ENCODE measurements at regions of chr1 and their contacts with region 1.

Region 1: GRCh38 chr1:67053785-67054772 is at the start of gene SLC35D1:
- DNase-seq: peak; percentile 83
- H3K4me3 ChIP-seq: peak within 1 kb of the TSS; percentile 58 to 90 (median 82)
- H3K27ac ChIP-seq: peak within 1 kb of the TSS; percentile 97 to 98 (median 98)
- H3K4me1 ChIP-seq: peaks cover 0 to 29% (median 18%) of the 10 kb centered on the region in 4 donors
- H3K27me3 ChIP-seq: no peaks in the 10 kb centered on the region
- CTCF ChIP-seq: no peak
- EP300 ChIP-seq: no peak
- POLR2A ChIP-seq: peak; percentile 26 to 52
- total RNA-seq, gene SLC35D1: 8.9 to 10.7 (median 9.5) TPM

Region 2: GRCh38 chr1:66924756-66925557 is 129.1 kb before region 1 on chr1 and contains the starts of genes DNAI4 and MIER1:
- intact Hi-C with region 1: loop called (anchors 2 kb)
- DNase-seq: peak; percentile 99
- H3K4me3 ChIP-seq: peak within 1 kb of the TSS; percentile 59 to 91 (median 74)
- H3K27ac ChIP-seq: peak within 1 kb of the TSS; percentile 89 to 95 (median 92)
- H3K4me1 ChIP-seq: peaks cover 0 to 38% (median 32%) of the 10 kb centered on the region in 4 donors
- H3K27me3 ChIP-seq: no peaks in the 10 kb centered on the region
- CTCF ChIP-seq: peak; percentile 27 to 58 (median 40)
- EP300 ChIP-seq: peak in 2 of 4 donors; percentile 34 to 43
- POLR2A ChIP-seq: peak; percentile 23 to 65
- total RNA-seq, gene DNAI4: 5.6 to 16.1 (median 9.5) TPM
- total RNA-seq, gene MIER1: 49.0 to 65.6 (median 58.4) TPM

Region 3: DNA sequence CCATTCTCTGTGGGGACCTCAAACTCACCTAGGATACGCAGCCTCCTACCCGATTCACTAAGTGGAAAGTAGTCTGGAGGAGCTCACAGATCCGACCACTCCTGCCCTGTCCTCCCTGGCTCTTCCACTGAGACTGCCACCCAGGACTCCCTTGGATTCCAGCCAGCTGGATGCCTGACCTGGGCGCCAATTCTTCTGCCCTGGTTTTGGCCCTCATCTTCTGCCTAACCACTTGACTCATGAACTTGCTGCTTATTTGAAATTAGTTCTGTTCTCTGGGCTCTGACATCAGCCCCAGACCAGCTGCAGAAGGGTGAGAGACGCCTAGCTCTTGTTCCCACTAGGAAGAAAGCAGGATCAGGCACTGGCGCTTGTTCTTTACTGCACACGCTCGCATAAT is 49.0 kb before region 1 on chr1:
- intact Hi-C with region 1: loop called (anchors 5 kb)
- DNase-seq: no peak
- H3K4me3 ChIP-seq: no peak overlapping the region
- H3K27ac ChIP-seq: peak overlapping the region in 1 of 4 donors; percentile 6
- H3K4me1 ChIP-seq: peaks cover 0 to 32% (median 16%) of the 10 kb centered on the region in 4 donors
- H3K27me3 ChIP-seq: no peaks in the 10 kb centered on the region
- CTCF ChIP-seq: no peak
- EP300 ChIP-seq: no peak
- POLR2A ChIP-seq: no peak

Region 4: DNA sequence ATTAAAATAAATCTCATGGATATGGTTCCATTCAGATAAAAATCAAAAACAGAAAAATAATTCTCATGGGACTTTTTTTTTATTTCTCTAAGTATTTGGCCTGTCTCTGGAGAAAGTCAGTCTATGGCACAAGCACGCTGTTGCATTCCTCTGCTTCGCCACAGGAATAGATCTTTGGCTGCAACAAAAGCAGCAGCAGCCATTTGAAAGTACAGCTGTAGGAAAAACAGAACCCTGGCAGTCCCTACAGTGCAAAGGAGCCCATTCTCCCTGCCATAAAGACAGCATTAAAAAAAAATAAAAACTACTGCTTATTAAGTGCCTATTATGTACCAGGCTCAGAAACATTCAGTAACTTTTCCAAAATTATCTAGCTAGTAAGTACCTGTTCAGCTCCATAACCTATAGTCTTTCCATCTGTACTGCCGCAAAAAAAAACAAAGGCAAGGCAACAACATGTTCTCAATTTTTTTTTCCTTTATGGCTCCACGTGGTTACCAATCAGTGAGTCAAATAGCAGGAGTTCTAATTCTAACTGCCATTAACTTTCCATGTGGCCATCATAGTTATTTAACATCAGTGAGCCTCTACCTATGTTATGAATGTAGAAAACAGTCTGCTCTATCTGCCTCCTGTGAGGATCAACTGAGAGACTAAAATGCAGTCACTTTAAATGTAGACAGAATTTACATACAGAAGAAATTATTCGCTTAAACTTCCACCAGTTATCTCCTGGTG is 22.8 kb before region 1 on chr1:
- intact Hi-C with region 1: loop called (anchors 2 kb)
- DNase-seq: no peak
- H3K4me3 ChIP-seq: no peak overlapping the region
- H3K27ac ChIP-seq: peak overlapping the region; percentile 53 to 80 (median 66)
- H3K4me1 ChIP-seq: peaks cover 0 to 32% (median 27%) of the 10 kb centered on the region in 4 donors
- H3K27me3 ChIP-seq: no peaks in the 10 kb centered on the region
- CTCF ChIP-seq: no peak
- EP300 ChIP-seq: no peak
- POLR2A ChIP-seq: no peak

Region 5: DNA sequence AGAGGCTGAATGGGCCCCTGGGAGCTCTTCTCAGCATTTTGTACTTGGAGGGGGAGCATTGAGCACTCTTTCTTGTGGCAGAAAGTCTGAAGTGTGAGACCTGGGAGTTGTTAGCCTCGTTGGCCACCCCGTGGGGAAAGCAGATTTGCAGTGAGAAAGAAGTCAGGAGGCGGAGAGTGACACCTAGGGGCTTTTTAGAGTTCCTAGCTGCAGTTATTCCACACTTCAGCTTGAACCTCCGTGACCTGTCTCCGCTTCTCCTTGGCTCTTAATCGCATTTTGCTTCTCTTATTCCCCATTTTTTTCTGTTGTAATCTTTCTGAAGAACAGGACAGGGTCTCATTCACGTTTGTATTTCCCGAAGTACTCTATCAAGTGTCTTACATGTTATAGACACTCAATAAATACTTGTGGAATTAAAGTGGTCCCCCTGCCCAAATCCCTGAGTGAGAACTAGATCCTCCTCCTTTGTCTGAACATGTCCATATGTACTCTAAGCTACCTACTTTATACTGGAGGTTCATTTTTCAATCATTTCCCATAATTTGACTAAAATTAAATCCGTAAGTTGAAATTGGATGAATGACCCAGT is 95.2 kb after region 1 on chr1:
- intact Hi-C with region 1: loop called (anchors 5 kb)
- DNase-seq: peak; percentile 82
- H3K4me3 ChIP-seq: no peak overlapping the region
- H3K27ac ChIP-seq: no peak overlapping the region
- H3K4me1 ChIP-seq: peaks cover 0 to 8% (median 3%) of the 10 kb centered on the region in 4 donors
- H3K27me3 ChIP-seq: no peaks in the 10 kb centered on the region
- CTCF ChIP-seq: peak; percentile 81 to 91 (median 86)
- EP300 ChIP-seq: no peak
- POLR2A ChIP-seq: no peak

Region 6: GRCh38 chr1:67430352-67431155 is 376.5 kb after region 1 on chr1 and contains the start of gene SERBP1:
- intact Hi-C with region 1: loop called (anchors 5 kb)
- DNase-seq: peak; percentile 97
- H3K4me3 ChIP-seq: peak within 1 kb of the TSS; percentile 62 to 83 (median 78)
- H3K27ac ChIP-seq: peak within 1 kb of the TSS; percentile 92 to 96 (median 94)
- H3K4me1 ChIP-seq: peaks cover 0 to 61% (median 37%) of the 10 kb centered on the region in 4 donors
- H3K27me3 ChIP-seq: no peaks in the 10 kb centered on the region
- CTCF ChIP-seq: no peak
- EP300 ChIP-seq: no peak
- POLR2A ChIP-seq: peak in 1 of 2 donors; percentile 52
- total RNA-seq, gene SERBP1: 201 to 236 (median 225) TPM